K562 (cell line): ENCODE measurements at regions of chr22 and their contacts with region 1.

Region 1: GRCh38 chr22:37457093-37457893 is 28.9 kb downstream of the MFNG start:
- DNase-seq: peak; percentile 71 to 83 (median 76)
- ATAC-seq: peak; percentile 98
- H3K4me3 ChIP-seq: no peak overlapping the region
- H3K27ac ChIP-seq: no peak overlapping the region
- H3K4me1 ChIP-seq: peaks cover 8 to 17% of the 10 kb centered on the region in 2 experiments; a peak in 3 of 5 replicates
- H3K27me3 ChIP-seq: peaks cover 0 to 19% of the 10 kb centered on the region in 2 experiments; a peak in 3 of 5 replicates
- CTCF ChIP-seq: peak; percentile 86 to 90 (median 87)
- EP300 ChIP-seq: no peak
- POLR2A ChIP-seq: no peak
- RAD21 ChIP-seq: peak; percentile 74 to 88

Region 2: DNA sequence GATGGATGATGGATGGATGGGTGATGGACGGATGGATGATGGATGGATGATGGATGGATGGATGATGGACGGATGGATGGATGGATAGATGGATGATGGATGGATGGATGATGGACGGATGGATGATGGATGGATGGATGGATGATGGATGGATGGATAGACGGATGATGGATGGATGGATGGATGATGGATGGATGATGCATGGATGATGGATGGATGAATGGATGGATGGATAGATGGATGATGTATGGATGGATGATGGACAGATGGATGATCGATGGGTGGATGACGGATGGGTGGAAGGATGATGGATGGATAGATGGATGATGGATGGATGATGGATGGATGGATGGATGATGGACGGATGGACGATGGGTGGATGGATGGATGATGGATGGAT is 384.6 kb before region 1 on chr22:
- CTCF ChIA-PET with region 1: no interaction called
- POLR2A ChIA-PET with region 1: no interaction called
- in situ Hi-C with region 1: no loop called
- intact Hi-C with region 1: no loop called
- DNase-seq: no peak
- ATAC-seq: no peak
- H3K4me3 ChIP-seq: no peak overlapping the region
- H3K27ac ChIP-seq: no peak overlapping the region
- H3K4me1 ChIP-seq: no peaks in the 10 kb centered on the region
- H3K27me3 ChIP-seq: peaks cover 0 to 40% of the 10 kb centered on the region in 2 experiments; a peak in 4 of 5 replicates
- CTCF ChIP-seq: no peak
- EP300 ChIP-seq: no peak
- POLR2A ChIP-seq: no peak
- RAD21 ChIP-seq: no peak

Region 3: GRCh38 chr22:37166675-37167066 is 290.6 kb before region 1 on chr22:
- CTCF ChIA-PET with region 1: no interaction called
- POLR2A ChIA-PET with region 1: no interaction called
- in situ Hi-C with region 1: loop called (anchors 5 kb)
- intact Hi-C with region 1: no loop called
- DNase-seq: peak; percentile 77 to 80 (median 78)
- ATAC-seq: peak; percentile 98
- H3K4me3 ChIP-seq: no peak overlapping the region
- H3K27ac ChIP-seq: no peak overlapping the region
- H3K4me1 ChIP-seq: peaks cover 0 to 13% of the 10 kb centered on the region in 2 experiments; a peak in 2 of 5 replicates
- H3K27me3 ChIP-seq: no peaks in the 10 kb centered on the region; a peak in 2 of 5 replicates
- CTCF ChIP-seq: peak; percentile 85 to 89 (median 85)
- EP300 ChIP-seq: no peak
- POLR2A ChIP-seq: no peak
- RAD21 ChIP-seq: peak; percentile 69 to 80

Region 4: DNA sequence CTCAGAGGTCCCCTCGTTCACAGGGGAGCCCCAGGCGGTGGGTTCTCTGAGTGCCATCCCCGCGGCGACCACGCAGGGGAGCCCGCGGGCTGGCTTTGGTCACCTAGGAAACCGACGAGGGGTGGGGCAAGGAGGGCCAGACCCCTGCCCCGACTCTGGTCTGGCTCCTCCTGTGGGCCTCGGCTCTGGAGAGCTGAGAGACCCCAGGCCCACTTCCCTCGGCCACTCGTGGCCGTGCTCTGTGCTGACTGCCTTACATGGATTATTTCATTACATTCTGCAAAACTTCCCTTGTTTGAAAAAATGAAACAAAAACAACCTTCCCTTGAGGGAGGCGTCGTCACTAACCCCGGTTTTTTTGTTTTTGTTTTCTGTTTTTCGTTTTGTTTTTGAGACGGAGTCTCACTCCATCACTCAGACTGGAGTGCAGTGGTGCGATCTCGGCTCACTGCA is 190.1 kb before region 1 on chr22:
- CTCF ChIA-PET with region 1: interaction called, 4 read pairs
- POLR2A ChIA-PET with region 1: no interaction called
- in situ Hi-C with region 1: no loop called
- intact Hi-C with region 1: loop called (anchors 5 kb)
- DNase-seq: peak; percentile 58 to 73 (median 68)
- ATAC-seq: peak; percentile 95
- H3K4me3 ChIP-seq: peak overlapping the region; percentile 23; the same call in 1 of the 2 replicates
- H3K27ac ChIP-seq: no peak overlapping the region
- H3K4me1 ChIP-seq: peaks cover 0 to 6% of the 10 kb centered on the region in 2 experiments; a peak in 3 of 5 replicates
- H3K27me3 ChIP-seq: no peaks in the 10 kb centered on the region; a peak in 3 of 5 replicates
- CTCF ChIP-seq: peak; percentile 71 to 73 (median 73)
- EP300 ChIP-seq: no peak
- POLR2A ChIP-seq: no peak
- RAD21 ChIP-seq: peak; percentile 58 to 79

Region 5: GRCh38 chr22:37316875-37317371 is 140.4 kb before region 1 on chr22:
- CTCF ChIA-PET with region 1: interaction called, 16 read pairs
- POLR2A ChIA-PET with region 1: no interaction called
- in situ Hi-C with region 1: loop called (anchors 5 kb)
- intact Hi-C with region 1: loop called (anchors 1 kb)
- DNase-seq: peak; percentile 75 to 81 (median 76)
- ATAC-seq: peak; percentile 97
- H3K4me3 ChIP-seq: no peak overlapping the region
- H3K27ac ChIP-seq: no peak overlapping the region
- H3K4me1 ChIP-seq: no peaks in the 10 kb centered on the region; a peak in 2 of 5 replicates
- H3K27me3 ChIP-seq: peaks cover 0 to 20% of the 10 kb centered on the region in 2 experiments; a peak in 2 of 5 replicates
- CTCF ChIP-seq: peak; percentile 86 to 87 (median 87)
- EP300 ChIP-seq: no peak
- POLR2A ChIP-seq: no peak
- RAD21 ChIP-seq: peak; percentile 79 to 91

Region 6: DNA sequence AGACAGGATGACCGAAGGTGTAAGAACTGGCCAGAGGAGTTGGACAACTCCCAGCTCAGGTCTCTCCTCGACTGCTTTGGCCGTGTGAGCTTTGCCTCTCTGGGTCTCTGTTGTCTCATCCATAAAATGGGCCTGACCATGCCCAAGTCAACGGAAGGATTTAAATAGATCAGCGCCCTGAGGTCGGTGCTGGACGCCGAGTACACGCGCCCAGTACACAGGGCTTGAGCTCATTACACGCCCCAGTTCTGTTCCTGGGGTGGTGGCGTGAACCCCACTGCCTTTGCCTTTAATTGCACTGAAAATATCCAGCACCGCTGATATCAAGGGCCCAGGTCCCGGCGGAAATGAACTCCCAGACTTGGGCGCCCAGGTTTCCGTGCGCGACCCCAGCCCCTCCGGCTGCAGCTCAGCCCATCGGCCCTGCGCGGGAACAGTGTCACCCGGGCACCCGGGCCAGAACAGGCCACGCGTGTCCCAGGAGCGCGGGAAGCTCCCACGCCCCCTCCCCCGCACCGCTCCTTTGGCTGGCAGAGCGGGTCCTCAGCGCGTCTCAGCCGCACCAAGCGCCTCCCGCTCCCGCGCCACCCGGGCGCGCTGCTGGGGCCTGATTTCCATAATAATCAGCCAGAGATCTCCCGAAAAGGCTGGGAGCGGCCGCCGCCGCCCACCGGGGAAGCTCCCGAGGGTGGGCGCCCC is 132.8 kb before region 1 on chr22:
- CTCF ChIA-PET with region 1: no interaction called
- POLR2A ChIA-PET with region 1: no interaction called
- in situ Hi-C with region 1: loop called (anchors 5 kb)
- intact Hi-C with region 1: no loop called
- DNase-seq: no peak
- ATAC-seq: no peak
- H3K4me3 ChIP-seq: no peak overlapping the region
- H3K27ac ChIP-seq: no peak overlapping the region
- H3K4me1 ChIP-seq: peaks cover 0 to 3% of the 10 kb centered on the region in 2 experiments; a peak in 1 of 5 replicates
- H3K27me3 ChIP-seq: peaks cover 4 to 33% of the 10 kb centered on the region in 2 experiments; a peak in 4 of 5 replicates
- CTCF ChIP-seq: no peak
- EP300 ChIP-seq: no peak
- POLR2A ChIP-seq: no peak
- RAD21 ChIP-seq: no peak

Region 7: GRCh38 chr22:37334859-37335805 is 122.2 kb before region 1 on chr22:
- CTCF ChIA-PET with region 1: no interaction called
- POLR2A ChIA-PET with region 1: no interaction called
- in situ Hi-C with region 1: no loop called
- intact Hi-C with region 1: no loop called
- DNase-seq: no peak
- ATAC-seq: no peak
- H3K4me3 ChIP-seq: no peak overlapping the region
- H3K27ac ChIP-seq: no peak overlapping the region
- H3K4me1 ChIP-seq: peaks cover 0 to 39% of the 10 kb centered on the region in 2 experiments; a peak in 3 of 5 replicates
- H3K27me3 ChIP-seq: peaks cover 16 to 61% of the 10 kb centered on the region in 2 experiments; a peak in 4 of 5 replicates
- CTCF ChIP-seq: no peak
- EP300 ChIP-seq: no peak
- POLR2A ChIP-seq: no peak
- RAD21 ChIP-seq: no peak